ENCODE measurements at regions of chr18 and their contacts with region 1.

Region 1: GRCh38 chr18:32815881-32816280 is 43.1 kb upstream of the KLHL14 start:
- DNase-seq: peak; percentile 32
- ATAC-seq: peak; percentile 33
- H3K4me3 ChIP-seq: peak overlapping the region in 1 of 5 experiments; percentile 11
- H3K4me3 Mint-ChIP-seq: no peak overlapping the region
- H3K27ac ChIP-seq: no peak overlapping the region
- H3K27ac Mint-ChIP-seq: no peak overlapping the region
- H3K4me1 ChIP-seq: peaks cover 8 to 15% of the 10 kb centered on the region in 2 donors
- H3K4me1 Mint-ChIP-seq: peaks cover 19% of the 10 kb centered on the region
- H3K27me3 ChIP-seq: no peaks in the 10 kb centered on the region
- H3K27me3 Mint-ChIP-seq: no peaks in the 10 kb centered on the region
- CTCF ChIP-seq: no peak

Region 2: GRCh38 chr18:32798209-32798960 is 17.5 kb before region 1 on chr18:
- CTCF ChIA-PET with region 1: interaction called, 9 read pairs
- POLR2A ChIA-PET with region 1: interaction called, 11 read pairs
- intact Hi-C with region 1: no loop called
- DNase-seq: no peak
- ATAC-seq: no peak
- H3K4me3 ChIP-seq: no peak overlapping the region
- H3K4me3 Mint-ChIP-seq: no peak overlapping the region
- H3K27ac ChIP-seq: no peak overlapping the region
- H3K27ac Mint-ChIP-seq: no peak overlapping the region
- H3K4me1 ChIP-seq: peaks cover 32 to 34% of the 10 kb centered on the region in 2 donors
- H3K4me1 Mint-ChIP-seq: peaks cover 55% of the 10 kb centered on the region
- H3K27me3 ChIP-seq: no peaks in the 10 kb centered on the region
- H3K27me3 Mint-ChIP-seq: no peaks in the 10 kb centered on the region
- CTCF ChIP-seq: no peak